Heart right ventricle (tissue), 16 donors: ENCODE measurements at regions of chr13 and their contacts with region 1.

Region 1: GRCh38 chr13:97454699-97455098 is 20.7 kb downstream of the RAP2A start:
- DNase-seq: no peak
- ATAC-seq: no peak
- H3K4me3 ChIP-seq: no peak overlapping the region
- H3K27ac ChIP-seq: no peak overlapping the region
- H3K4me1 ChIP-seq: peaks cover 0 to 19% (median 12%) of the 10 kb centered on the region in 9 donors
- H3K27me3 ChIP-seq: no peaks in the 10 kb centered on the region
- CTCF ChIP-seq: no peak

Region 2: DNA sequence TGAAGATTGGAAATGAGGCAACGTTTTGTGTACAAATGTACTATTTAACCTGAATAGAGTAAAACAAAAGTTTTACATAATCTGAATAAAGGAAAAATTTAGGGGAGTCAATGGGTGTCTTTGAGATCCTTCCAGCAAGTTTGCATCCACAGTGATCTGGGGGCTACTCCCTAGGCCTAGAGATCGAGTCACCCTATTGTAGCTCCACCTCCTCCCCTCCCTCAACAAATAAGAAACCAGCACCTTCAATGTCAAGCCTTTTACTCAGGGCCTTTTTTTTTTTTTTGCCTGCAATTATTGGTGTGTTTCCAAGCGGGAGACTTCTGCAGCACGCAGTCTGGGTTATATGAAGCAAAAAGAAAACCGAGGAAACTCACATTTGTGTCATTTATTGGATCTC is 37.0 kb before region 1 on chr13:
- intact Hi-C with region 1: loop called in 1 of 10 experiments (anchors 2 kb)
- DNase-seq: no peak
- ATAC-seq: no peak
- H3K4me3 ChIP-seq: no peak overlapping the region
- H3K27ac ChIP-seq: no peak overlapping the region
- H3K4me1 ChIP-seq: peaks cover 0 to 28% (median 8%) of the 10 kb centered on the region in 9 donors
- H3K27me3 ChIP-seq: no peaks in the 10 kb centered on the region
- CTCF ChIP-seq: no peak